ENCODE measurements at regions of chr7 and their contacts with region 1.

Region 1: GRCh38 chr7:90262438-90262837 is 17.5 kb downstream of the CFAP69 start:
- DNase-seq: peak; percentile 21
- H3K4me3 ChIP-seq: no peak overlapping the region
- H3K27ac ChIP-seq: no peak overlapping the region
- H3K4me1 ChIP-seq: no peaks in the 10 kb centered on the region
- H3K27me3 ChIP-seq: no peaks in the 10 kb centered on the region
- CTCF ChIP-seq: peak; percentile 32 to 54

Region 2: GRCh38 chr7:90173127-90173844 is 89.2 kb before region 1 on chr7:
- CTCF ChIA-PET with region 1: no interaction called
- dilution Hi-C with region 1: no loop called
- in situ Hi-C with region 1: loop called in 1 of 2 experiments (anchors 25 kb)
- intact Hi-C with region 1: no loop called
- DNase-seq: no peak
- H3K4me3 ChIP-seq: no peak overlapping the region
- H3K27ac ChIP-seq: no peak overlapping the region
- H3K4me1 ChIP-seq: peaks cover 10% of the 10 kb centered on the region
- H3K27me3 ChIP-seq: no peaks in the 10 kb centered on the region
- CTCF ChIP-seq: no peak

Region 3: DNA sequence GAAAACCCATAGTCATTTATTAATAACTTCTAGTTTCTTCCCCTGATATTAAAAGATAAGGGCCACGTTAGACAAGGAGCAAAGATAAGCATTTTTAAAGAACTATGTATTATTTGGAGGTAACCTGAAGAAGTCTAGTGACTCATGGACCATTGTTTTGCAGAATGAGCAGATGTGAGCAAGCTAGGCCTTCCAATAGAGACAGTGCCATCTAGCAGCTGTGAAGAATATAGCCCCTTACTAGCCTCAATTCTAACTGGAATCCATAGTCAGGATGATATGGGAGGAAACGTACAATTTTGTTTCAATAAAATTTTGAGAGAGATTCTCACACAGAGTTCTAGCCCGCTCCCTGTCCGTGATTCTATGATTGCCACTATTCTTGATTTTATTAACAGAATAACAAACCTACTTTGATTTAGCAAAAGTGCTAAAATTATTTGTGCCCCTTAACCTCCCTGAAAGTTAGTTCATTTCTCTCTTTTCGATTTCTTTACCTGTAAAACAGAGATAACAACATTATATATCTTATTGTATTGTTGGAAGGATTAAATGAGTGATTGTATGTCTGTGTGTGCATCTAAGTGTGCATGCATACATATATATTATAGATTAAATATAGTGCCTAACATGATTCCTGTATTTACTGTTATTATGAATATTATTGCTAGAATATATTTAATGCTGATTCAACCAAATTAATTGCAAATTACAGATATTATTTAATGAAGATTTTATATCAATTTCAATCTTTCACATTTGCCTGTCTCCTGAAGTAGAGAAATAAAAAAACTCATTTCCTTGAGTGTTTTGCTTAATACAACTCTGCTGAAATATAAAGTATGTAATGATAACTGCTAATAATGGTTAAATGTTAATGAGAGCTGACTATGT is 36.0 kb after region 1 on chr7:
- CTCF ChIA-PET with region 1: no interaction called
- dilution Hi-C with region 1: no loop called
- in situ Hi-C with region 1: no loop called
- intact Hi-C with region 1: no loop called
- DNase-seq: peak; percentile 61
- H3K4me3 ChIP-seq: no peak overlapping the region
- H3K27ac ChIP-seq: no peak overlapping the region
- H3K4me1 ChIP-seq: no peaks in the 10 kb centered on the region
- H3K27me3 ChIP-seq: no peaks in the 10 kb centered on the region
- CTCF ChIP-seq: peak; percentile 71 to 81

Region 4: GRCh38 chr7:90424720-90425119 is 162.3 kb after region 1 on chr7:
- CTCF ChIA-PET with region 1: no interaction called
- dilution Hi-C with region 1: no loop called
- in situ Hi-C with region 1: loop called in 1 of 2 experiments (anchors 25 kb)
- intact Hi-C with region 1: loop called (anchors 1 kb)
- DNase-seq: no peak
- H3K4me3 ChIP-seq: no peak overlapping the region
- H3K27ac ChIP-seq: no peak overlapping the region
- H3K4me1 ChIP-seq: peaks cover 9% of the 10 kb centered on the region
- H3K27me3 ChIP-seq: no peaks in the 10 kb centered on the region
- CTCF ChIP-seq: no peak